ENCODE measurements at regions of chr19 and their contacts with region 1.

Region 1: DNA sequence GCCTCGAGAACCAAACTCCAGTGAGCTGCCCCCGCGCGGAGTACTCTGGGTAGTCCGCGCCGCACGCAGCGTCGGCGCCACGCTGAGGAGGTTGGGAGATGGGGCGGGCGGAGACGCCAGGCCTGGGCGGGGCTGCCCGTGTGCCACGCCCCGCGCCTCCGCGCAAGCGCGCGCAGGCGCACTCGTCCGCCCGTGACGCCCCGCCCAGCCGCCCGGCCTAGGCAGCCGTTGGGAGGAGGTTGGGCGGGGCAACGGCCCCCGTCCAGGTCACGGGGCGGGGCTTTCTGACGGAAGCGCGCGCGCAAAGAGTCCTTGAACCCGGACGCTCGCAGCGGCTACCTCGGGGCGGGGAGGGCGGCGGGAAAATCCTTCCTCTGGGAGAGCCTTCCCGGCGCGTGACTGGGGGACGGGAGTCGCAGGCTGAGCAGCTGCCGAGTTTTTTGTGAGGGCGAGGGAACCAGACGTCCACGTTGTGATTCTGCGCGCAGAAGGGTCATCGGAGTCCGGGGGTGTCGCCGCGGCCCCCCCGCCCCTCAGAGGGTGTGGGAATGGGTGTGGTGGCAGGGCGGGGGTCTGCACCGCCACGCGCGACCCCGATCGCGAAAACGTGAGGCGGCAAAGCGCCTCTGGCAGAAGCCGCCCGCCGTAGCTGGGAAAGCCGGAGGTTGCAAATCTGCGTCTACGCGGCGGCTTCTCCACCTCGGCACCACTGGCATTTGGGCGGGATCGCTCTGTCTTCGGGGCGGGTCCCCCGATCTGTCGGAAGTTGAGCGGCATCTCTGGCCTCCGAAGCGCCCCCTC is at the start of gene MED26:
- DNase-seq: peak; percentile 96
- ATAC-seq: peak; percentile 94
- H3K4me3 Mint-ChIP-seq: peak within 1 kb of the TSS; percentile 99
- H3K27ac Mint-ChIP-seq: peak within 1 kb of the TSS; percentile 100
- H3K4me1 Mint-ChIP-seq: peaks cover 43% of the 10 kb centered on the region
- H3K27me3 Mint-ChIP-seq: no peaks in the 10 kb centered on the region
- total RNA-seq, gene MED26: 17.2 to 17.4 TPM

Region 2: GRCh38 chr19:16566161-16566560 is 62.2 kb before region 1 on chr19:
- CTCF ChIA-PET with region 1: no interaction called
- POLR2A ChIA-PET with region 1: interaction called, 23 read pairs
- DNase-seq: peak; percentile 92
- ATAC-seq: peak; percentile 99
- H3K4me3 Mint-ChIP-seq: peak overlapping the region; percentile 74
- H3K27ac Mint-ChIP-seq: peak overlapping the region; percentile 99
- H3K4me1 Mint-ChIP-seq: peaks cover 55% of the 10 kb centered on the region
- H3K27me3 Mint-ChIP-seq: no peaks in the 10 kb centered on the region

Region 3: DNA sequence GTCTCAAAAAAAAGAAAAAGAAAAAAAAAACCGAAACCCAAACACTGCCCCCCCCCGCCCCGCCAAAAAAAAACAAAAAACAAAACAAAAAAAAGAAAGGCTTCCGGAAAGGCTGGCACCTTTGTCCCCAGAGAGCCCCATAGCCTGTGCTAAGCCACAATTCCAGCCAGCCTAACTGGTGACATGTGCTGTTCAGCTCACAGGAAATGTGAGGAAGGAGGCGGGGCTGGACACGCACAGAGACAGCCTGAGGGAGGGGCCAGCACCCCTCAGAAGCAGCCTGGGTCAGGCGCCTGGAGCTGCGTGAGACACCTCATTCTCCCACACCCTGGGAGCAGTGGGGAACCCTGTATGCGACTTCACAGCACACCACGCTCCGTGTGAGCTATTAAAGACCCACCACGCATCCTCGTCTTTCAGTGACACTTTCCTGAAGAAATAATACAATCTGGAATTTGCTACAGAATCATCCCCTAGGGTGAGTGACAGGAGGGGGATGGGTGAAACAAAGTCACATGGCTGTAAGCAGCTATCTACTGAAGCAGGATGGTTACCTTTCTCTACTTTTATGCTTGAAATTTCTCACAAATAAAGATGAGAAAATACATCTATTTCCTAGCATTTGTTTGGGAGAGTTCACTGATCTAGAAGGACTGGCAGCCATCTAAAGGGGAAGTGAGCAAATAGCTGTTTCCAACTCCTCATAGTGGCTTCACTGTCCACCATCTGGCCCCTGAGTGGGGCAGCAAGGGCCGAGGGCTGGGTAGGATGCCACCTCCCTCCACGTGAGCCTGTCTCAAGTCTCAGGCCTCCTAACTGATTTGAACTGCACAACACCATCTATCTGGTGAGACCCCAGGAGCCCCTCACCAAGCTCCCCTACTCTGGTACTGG is 43.9 kb before region 1 on chr19:
- CTCF ChIA-PET with region 1: interaction called, 18 read pairs
- POLR2A ChIA-PET with region 1: interaction called, 24 read pairs
- DNase-seq: peak; percentile 94
- ATAC-seq: peak; percentile 85
- H3K4me3 Mint-ChIP-seq: peak overlapping the region; percentile 78
- H3K27ac Mint-ChIP-seq: peak overlapping the region; percentile 95
- H3K4me1 Mint-ChIP-seq: peaks cover 90% of the 10 kb centered on the region
- H3K27me3 Mint-ChIP-seq: no peaks in the 10 kb centered on the region

Region 4: GRCh38 chr19:16615808-16616207 is 12.6 kb before region 1 on chr19:
- CTCF ChIA-PET with region 1: no interaction called
- POLR2A ChIA-PET with region 1: interaction called, 16 read pairs
- DNase-seq: no peak
- ATAC-seq: no peak
- H3K4me3 Mint-ChIP-seq: no peak overlapping the region
- H3K27ac Mint-ChIP-seq: peak overlapping the region; percentile 53
- H3K4me1 Mint-ChIP-seq: peaks cover 83% of the 10 kb centered on the region
- H3K27me3 Mint-ChIP-seq: no peaks in the 10 kb centered on the region